ENCODE measurements at regions of chr7 and their contacts with region 1.

Region 1: DNA sequence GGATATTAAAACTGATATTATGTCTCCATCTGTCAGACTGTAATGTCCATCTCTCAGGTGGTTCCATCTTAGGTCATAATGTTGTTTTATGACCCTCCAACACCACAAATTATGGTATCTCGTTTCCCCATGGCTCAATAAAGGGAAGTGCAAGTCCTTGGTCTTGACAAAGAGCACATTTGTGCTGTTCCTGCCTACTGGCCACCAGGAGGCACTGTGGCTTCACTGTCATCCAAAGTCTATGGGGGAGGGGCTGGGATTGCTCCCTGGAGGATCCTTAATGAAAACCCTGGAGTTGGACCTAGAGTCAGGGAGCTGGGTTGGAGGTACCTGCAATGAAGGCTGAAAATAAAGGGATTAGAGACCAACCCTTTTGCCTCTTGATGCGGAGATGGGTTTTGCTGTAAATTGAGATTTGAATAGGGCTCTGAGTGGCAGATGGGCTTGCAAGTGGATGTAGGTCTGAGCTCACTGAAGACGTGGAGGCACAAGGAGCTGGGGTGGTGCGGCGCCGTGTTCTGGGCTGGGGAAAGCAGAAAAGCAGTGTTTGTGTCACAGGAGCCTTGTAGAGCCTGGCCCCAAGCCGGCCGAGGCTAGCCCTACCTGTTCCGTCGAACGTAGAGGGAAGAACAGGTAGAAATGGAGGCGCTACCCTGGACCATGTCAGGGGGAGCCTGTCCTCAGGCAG is 180.5 kb upstream of the PRSS58 start:
- DNase-seq: peak; percentile 68
- ATAC-seq: peak; percentile 90
- H3K4me3 Mint-ChIP-seq: no peak overlapping the region
- H3K27ac Mint-ChIP-seq: no peak overlapping the region
- H3K4me1 Mint-ChIP-seq: peaks cover 17% of the 10 kb centered on the region
- H3K27me3 Mint-ChIP-seq: no peaks in the 10 kb centered on the region; the same call in 1 of the 2 replicates
- CTCF ChIP-seq: peak; percentile 69

Region 2: DNA sequence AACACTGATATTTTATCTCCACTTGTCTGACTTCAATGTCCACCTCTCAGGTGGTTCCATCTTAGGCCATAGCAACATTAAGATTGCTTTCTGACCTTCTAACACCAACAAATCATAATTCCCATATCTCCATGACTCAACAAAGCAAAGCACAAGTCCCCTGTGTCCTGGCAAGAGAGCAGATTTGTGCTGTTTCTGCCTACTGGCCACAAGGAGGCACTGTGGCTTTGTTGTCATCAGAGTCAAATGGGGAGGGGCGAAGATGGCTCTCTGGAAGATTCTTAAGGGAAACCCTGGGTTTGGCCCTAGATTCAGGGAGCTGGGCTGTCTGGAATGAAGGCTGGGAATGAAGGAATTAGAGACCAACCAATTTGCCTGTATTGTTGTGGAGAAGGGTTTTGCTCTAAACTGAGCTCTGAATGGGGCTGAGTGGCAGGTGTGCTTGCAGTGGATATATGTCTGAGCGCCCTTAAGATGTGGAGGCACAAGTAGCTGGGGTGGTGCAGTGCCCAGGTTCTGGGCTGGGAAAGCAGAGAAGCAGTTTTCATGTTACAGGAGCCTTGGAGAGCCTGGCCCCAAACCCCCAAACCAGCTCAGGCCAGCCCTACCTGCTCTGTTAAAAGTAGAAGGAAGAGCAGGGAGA is 25.7 kb before region 1 on chr7:
- CTCF ChIA-PET with region 1: interaction called, 15 read pairs
- POLR2A ChIA-PET with region 1: no interaction called
- DNase-seq: peak; percentile 55
- ATAC-seq: peak; percentile 95
- H3K4me3 Mint-ChIP-seq: no peak overlapping the region
- H3K27ac Mint-ChIP-seq: no peak overlapping the region
- H3K4me1 Mint-ChIP-seq: peaks cover 14% of the 10 kb centered on the region
- H3K27me3 Mint-ChIP-seq: no peaks in the 10 kb centered on the region; the same call in 1 of the 2 replicates
- CTCF ChIP-seq: peak; percentile 77

Region 3: DNA sequence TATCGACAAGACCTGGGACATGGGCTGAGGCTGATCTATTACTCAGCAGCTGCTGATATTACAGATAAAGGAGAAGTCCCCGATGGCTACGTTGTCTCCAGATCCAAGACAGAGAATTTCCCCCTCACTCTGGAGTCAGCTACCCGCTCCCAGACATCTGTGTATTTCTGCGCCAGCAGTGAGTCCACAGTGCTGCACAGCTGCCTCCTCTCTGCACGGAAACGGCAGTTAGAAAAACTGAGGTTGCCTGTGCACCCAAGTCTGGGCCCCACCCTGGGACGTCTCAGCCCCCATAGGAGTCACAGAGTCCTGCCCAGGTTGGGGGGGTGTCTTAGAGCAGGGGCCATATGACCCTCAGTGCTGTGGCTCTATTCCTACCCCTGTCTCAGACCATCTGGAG is 13.1 kb before region 1 on chr7:
- CTCF ChIA-PET with region 1: interaction called, 14 read pairs
- POLR2A ChIA-PET with region 1: no interaction called
- DNase-seq: no peak
- ATAC-seq: no peak
- H3K4me3 Mint-ChIP-seq: no peak overlapping the region
- H3K27ac Mint-ChIP-seq: no peak overlapping the region
- H3K4me1 Mint-ChIP-seq: peaks cover 5% of the 10 kb centered on the region
- H3K27me3 Mint-ChIP-seq: no peaks in the 10 kb centered on the region; the same call in 1 of the 2 replicates
- CTCF ChIP-seq: no peak

Region 4: DNA sequence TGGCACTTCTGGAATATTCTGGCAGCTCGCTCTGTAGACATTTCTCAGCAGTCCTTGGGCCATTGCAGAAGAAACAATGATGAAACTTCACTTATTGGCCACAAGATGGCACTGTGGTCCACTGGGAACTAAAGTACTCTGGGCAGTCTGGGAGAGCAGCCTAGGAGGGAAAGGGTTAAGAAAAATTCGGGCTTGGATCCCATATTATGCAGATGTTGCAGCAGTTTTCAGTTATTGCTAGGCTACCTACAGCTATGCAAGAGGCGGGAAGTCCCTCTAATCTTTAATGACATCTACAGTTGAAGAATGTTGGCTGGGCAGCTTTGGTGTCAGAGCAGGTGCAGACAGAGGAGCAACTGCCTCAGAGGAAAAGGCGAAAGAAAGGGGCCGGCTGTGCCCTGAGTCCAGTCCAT is 21.2 kb after region 1 on chr7:
- CTCF ChIA-PET with region 1: interaction called, 37 read pairs
- POLR2A ChIA-PET with region 1: no interaction called
- DNase-seq: no peak
- ATAC-seq: peak; percentile 94
- H3K4me3 Mint-ChIP-seq: no peak overlapping the region
- H3K27ac Mint-ChIP-seq: no peak overlapping the region
- H3K4me1 Mint-ChIP-seq: peaks cover 13% of the 10 kb centered on the region
- H3K27me3 Mint-ChIP-seq: no peaks in the 10 kb centered on the region; the same call in 1 of the 2 replicates
- CTCF ChIP-seq: peak; percentile 65

Region 5: DNA sequence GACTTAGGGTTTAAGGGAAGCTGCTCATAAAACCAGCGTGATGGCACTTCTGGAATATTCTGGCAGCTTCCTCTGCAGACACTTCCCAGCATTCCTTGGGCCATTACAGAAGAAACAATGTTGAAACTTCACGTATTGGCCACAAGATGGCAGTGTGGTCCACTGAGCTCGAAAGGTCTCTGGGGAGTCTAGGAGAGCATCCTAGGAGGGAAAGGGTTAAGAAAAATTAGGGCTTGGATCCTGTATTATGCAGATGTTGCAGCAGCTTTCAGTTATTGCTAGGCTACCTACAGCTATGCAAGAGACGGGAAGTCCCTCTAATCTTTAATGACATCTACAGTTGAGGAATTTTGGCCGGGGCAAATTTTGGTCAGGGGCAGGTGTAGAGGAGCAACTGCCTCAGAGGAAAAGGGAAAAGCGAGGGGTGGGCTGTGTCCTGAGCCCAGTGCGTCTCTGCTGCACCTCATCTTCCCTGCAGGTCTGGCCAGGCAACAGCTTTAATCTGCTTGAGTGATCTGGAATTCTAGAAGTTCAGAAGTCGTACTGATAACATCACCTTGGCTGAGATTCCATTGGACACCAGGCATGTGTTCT is 40.2 kb after region 1 on chr7:
- CTCF ChIA-PET with region 1: interaction called, 18 read pairs
- POLR2A ChIA-PET with region 1: no interaction called
- DNase-seq: peak; percentile 38
- ATAC-seq: peak; percentile 79
- H3K4me3 Mint-ChIP-seq: no peak overlapping the region
- H3K27ac Mint-ChIP-seq: no peak overlapping the region
- H3K4me1 Mint-ChIP-seq: peaks cover 11% of the 10 kb centered on the region
- H3K27me3 Mint-ChIP-seq: peaks cover 12% of the 10 kb centered on the region
- CTCF ChIP-seq: peak; percentile 62

Region 6: DNA sequence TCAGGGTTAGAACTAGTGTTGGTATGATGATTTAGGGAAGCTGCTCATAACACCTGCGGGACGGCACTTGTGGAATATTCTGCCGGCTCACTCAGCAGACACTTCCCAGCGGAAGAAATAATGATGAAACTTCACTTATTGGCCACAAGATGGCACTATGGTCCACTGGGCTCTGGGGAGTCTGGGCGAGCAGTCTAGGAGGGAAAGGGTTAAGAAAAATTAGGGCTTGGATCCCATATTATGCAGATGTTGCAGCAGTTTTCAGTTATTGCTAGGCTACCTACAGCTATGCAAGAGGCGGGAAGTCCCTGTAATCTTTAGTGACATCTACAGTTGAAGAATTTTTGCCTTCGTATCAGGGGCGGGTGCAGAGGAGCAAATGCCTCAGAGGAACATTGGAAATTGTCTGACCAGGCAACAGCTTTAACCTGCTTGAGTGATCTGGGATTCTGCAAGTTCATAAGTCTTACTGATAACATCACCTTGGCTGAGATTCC is 58.2 kb after region 1 on chr7:
- CTCF ChIA-PET with region 1: interaction called, 14 read pairs
- POLR2A ChIA-PET with region 1: no interaction called
- DNase-seq: no peak
- ATAC-seq: peak; percentile 82
- H3K4me3 Mint-ChIP-seq: peak overlapping the region; percentile 45
- H3K27ac Mint-ChIP-seq: no peak overlapping the region
- H3K4me1 Mint-ChIP-seq: no peaks in the 10 kb centered on the region
- H3K27me3 Mint-ChIP-seq: peaks cover 17% of the 10 kb centered on the region
- CTCF ChIP-seq: peak; percentile 74

Region 7: DNA sequence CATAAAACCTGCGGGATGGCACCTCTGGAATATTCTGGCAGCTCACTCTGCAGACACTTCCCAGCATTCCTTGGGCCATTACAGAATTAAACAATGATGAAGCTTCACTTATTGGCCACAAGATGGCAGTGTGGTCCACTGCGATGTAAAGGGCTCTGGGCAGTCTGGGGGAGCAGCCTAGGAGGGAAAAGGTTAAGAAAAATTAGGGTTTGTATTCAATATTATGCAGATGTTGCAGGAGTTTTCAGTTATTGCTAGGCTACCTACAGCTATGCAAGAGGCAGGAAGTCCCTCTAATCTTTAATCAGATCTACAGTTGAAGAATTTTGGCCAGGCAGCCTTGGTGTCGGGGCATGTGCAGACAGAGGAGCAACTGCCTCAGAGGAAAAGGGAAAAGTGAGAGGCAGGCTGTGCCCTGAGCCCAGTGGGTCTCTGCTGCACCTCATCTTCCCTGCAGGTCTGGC is 77.7 kb after region 1 on chr7:
- CTCF ChIA-PET with region 1: interaction called, 12 read pairs
- POLR2A ChIA-PET with region 1: no interaction called
- DNase-seq: peak; percentile 26
- ATAC-seq: peak; percentile 92
- H3K4me3 Mint-ChIP-seq: no peak overlapping the region
- H3K27ac Mint-ChIP-seq: no peak overlapping the region
- H3K4me1 Mint-ChIP-seq: peaks cover 9% of the 10 kb centered on the region
- H3K27me3 Mint-ChIP-seq: peaks cover 5% of the 10 kb centered on the region; the same call in 1 of the 2 replicates
- CTCF ChIP-seq: peak; percentile 41; the same call in 1 of the 2 replicates

Measured in WTC11 (cell line).